MCF 10A (cell line): ENCODE measurements at regions of chr5 and their contacts with region 1.

Region 1: GRCh38 chr5:131417240-131417869 is 153.5 kb downstream of the CDC42SE2 start:
- DNase-seq: peak; percentile 85
- H3K4me3 Mint-ChIP-seq: no peak overlapping the region
- H3K27ac Mint-ChIP-seq: no peak overlapping the region
- H3K4me1 Mint-ChIP-seq: peaks cover 5% of the 10 kb centered on the region
- H3K27me3 Mint-ChIP-seq: no peaks in the 10 kb centered on the region
- CTCF ChIP-seq: peak; percentile 89

Region 2: GRCh38 chr5:130720355-130720754 is 697.0 kb before region 1 on chr5:
- CTCF ChIA-PET with region 1: no interaction called
- POLR2A ChIA-PET with region 1: no interaction called
- intact Hi-C with region 1: loop called (anchors 2 kb)
- DNase-seq: peak; percentile 88
- H3K4me3 Mint-ChIP-seq: no peak overlapping the region
- H3K27ac Mint-ChIP-seq: no peak overlapping the region
- H3K4me1 Mint-ChIP-seq: no peaks in the 10 kb centered on the region
- H3K27me3 Mint-ChIP-seq: no peaks in the 10 kb centered on the region
- CTCF ChIP-seq: peak; percentile 80

Region 3: DNA sequence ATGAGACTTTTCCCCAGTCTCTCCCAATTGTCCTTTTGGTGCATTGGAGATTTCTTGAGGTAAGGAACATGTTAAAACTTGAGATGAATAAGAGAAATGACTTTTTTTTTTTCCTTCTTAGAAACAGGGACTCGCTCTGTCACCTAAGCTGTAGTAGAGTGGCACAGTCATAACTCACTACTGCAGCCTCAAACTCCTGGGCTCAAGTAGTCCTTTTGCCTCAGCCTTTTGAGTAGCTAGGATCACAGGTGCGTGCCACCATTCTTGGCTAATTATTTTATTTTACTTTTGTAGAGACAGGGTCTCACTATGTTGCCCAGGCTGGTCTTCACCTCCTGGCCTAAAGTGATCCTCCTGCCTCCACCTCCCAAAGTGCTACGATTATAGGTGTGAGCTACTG is 127.6 kb before region 1 on chr5:
- CTCF ChIA-PET with region 1: no interaction called
- POLR2A ChIA-PET with region 1: no interaction called
- intact Hi-C with region 1: no loop called
- DNase-seq: no peak
- H3K4me3 Mint-ChIP-seq: no peak overlapping the region
- H3K27ac Mint-ChIP-seq: peak overlapping the region; percentile 39
- H3K4me1 Mint-ChIP-seq: peaks cover 16% of the 10 kb centered on the region
- H3K27me3 Mint-ChIP-seq: no peaks in the 10 kb centered on the region
- CTCF ChIP-seq: no peak